Activated CD4-positive, alpha-beta T cell treated with anti-CD3 and anti-CD28 coated beads for 36 hours (primary cell): ENCODE measurements at regions of chr12 and their contacts with region 1.

Region 1: GRCh38 chr12:95858479-95859343 is at the start of gene SNRPF:
- DNase-seq: peak; percentile 95
- ATAC-seq: peak; percentile 95
- H3K4me3 Mint-ChIP-seq: no peak within 1 kb of the TSS
- H3K27ac Mint-ChIP-seq: peak within 1 kb of the TSS; percentile 59
- H3K4me1 Mint-ChIP-seq: peaks cover 28% of the 10 kb centered on the region
- H3K27me3 Mint-ChIP-seq: peaks cover 3% of the 10 kb centered on the region
- total RNA-seq, gene SNRPF: 23.1 to 61.1 TPM

Region 2: GRCh38 chr12:95548539-95549391 is 309.9 kb before region 1 on chr12:
- CTCF ChIA-PET with region 1: no interaction called
- POLR2A ChIA-PET with region 1: no interaction called
- intact Hi-C with region 1: loop called in 1 of 2 experiments (anchors 1 kb)
- DNase-seq: peak; percentile 82
- ATAC-seq: peak; percentile 83
- H3K4me3 Mint-ChIP-seq: peak overlapping the region; percentile 84
- H3K27ac Mint-ChIP-seq: peak overlapping the region; percentile 56
- H3K4me1 Mint-ChIP-seq: peaks cover 37% of the 10 kb centered on the region
- H3K27me3 Mint-ChIP-seq: peaks cover 16% of the 10 kb centered on the region